Caco-2 (cell line): ENCODE measurements at regions of chr22 and their contacts with region 1.

Region 1: GRCh38 chr22:35150183-35151107 is 84.5 kb downstream of the ISX start:
- DNase-seq: peak; percentile 64 to 81
- H3K4me3 ChIP-seq: no peak overlapping the region
- H3K4me3 Mint-ChIP-seq: no peak overlapping the region
- H3K27ac Mint-ChIP-seq: no peak overlapping the region
- H3K4me1 ChIP-seq: no peaks in the 10 kb centered on the region
- H3K4me1 Mint-ChIP-seq: no peaks in the 10 kb centered on the region
- H3K27me3 ChIP-seq: no peaks in the 10 kb centered on the region
- H3K27me3 Mint-ChIP-seq: peaks cover 12% of the 10 kb centered on the region
- CTCF ChIP-seq: peak; percentile 78 to 79

Region 2: GRCh38 chr22:34414484-34415440 is 735.7 kb before region 1 on chr22:
- CTCF ChIA-PET with region 1: interaction called, 5 read pairs
- POLR2A ChIA-PET with region 1: no interaction called
- intact Hi-C with region 1: loop called (anchors 1 kb)
- DNase-seq: peak; percentile 81 to 82
- H3K4me3 ChIP-seq: no peak overlapping the region
- H3K4me3 Mint-ChIP-seq: no peak overlapping the region
- H3K27ac Mint-ChIP-seq: no peak overlapping the region
- H3K4me1 ChIP-seq: no peaks in the 10 kb centered on the region
- H3K4me1 Mint-ChIP-seq: no peaks in the 10 kb centered on the region
- H3K27me3 ChIP-seq: no peaks in the 10 kb centered on the region
- H3K27me3 Mint-ChIP-seq: peaks cover 6% of the 10 kb centered on the region
- CTCF ChIP-seq: peak; percentile 78 to 82

Region 3: GRCh38 chr22:34943830-34944229 is 206.6 kb before region 1 on chr22:
- CTCF ChIA-PET with region 1: interaction called, 12 read pairs
- POLR2A ChIA-PET with region 1: no interaction called
- intact Hi-C with region 1: no loop called
- DNase-seq: peak in 1 of 2 experiments; percentile 4
- H3K4me3 ChIP-seq: no peak overlapping the region
- H3K4me3 Mint-ChIP-seq: no peak overlapping the region
- H3K27ac Mint-ChIP-seq: no peak overlapping the region
- H3K4me1 ChIP-seq: no peaks in the 10 kb centered on the region
- H3K4me1 Mint-ChIP-seq: no peaks in the 10 kb centered on the region
- H3K27me3 ChIP-seq: no peaks in the 10 kb centered on the region
- H3K27me3 Mint-ChIP-seq: no peaks in the 10 kb centered on the region
- CTCF ChIP-seq: peak in 1 of 2 experiments; percentile 26

Region 4: DNA sequence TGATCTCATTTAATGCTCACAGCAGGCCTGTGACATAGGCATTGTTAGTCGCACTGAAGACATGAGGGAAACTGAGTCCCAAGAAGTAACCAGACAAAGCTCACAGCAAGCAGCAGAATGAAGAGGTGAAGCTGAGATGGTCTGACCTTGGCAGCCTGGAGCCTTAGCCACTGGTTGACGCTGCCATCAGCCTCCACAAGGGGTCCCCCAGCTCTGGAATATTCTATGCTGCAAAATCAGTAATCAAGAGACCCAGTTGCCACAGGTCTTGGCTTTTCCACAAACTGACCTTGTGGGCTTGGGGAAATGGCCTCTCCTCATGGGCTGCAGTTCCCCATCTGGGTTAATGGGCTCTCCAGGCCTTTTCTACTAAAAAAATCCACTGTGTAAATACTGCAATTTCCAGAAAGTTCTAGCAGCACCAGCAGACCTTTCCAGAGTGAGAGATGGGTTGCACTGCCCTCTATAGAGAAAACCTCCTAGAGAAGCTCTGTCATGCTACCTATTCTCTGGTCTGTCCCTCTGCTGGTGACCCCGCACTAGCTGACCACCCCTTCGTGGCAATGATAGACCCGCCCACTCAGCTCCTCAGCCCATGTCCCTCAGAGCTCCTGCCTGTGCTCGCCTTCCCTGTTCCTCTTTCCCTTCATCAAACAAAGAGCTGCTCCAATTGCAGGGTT is 107.1 kb before region 1 on chr22:
- CTCF ChIA-PET with region 1: interaction called, 49 read pairs
- POLR2A ChIA-PET with region 1: no interaction called
- intact Hi-C with region 1: loop called (anchors 1 kb)
- DNase-seq: peak in 1 of 2 experiments; percentile 66
- H3K4me3 ChIP-seq: no peak overlapping the region
- H3K4me3 Mint-ChIP-seq: no peak overlapping the region
- H3K27ac Mint-ChIP-seq: no peak overlapping the region
- H3K4me1 ChIP-seq: peaks cover 5% of the 10 kb centered on the region; the same call in 1 of the 2 replicates
- H3K4me1 Mint-ChIP-seq: no peaks in the 10 kb centered on the region
- H3K27me3 ChIP-seq: no peaks in the 10 kb centered on the region
- H3K27me3 Mint-ChIP-seq: peaks cover 3% of the 10 kb centered on the region
- CTCF ChIP-seq: peak; percentile 56 to 58

Region 5: GRCh38 chr22:35065796-35066218 is 84.6 kb before region 1 on chr22 and contains the start of gene ISX:
- CTCF ChIA-PET with region 1: interaction called, 11 read pairs
- POLR2A ChIA-PET with region 1: no interaction called
- intact Hi-C with region 1: no loop called
- DNase-seq: peak; percentile 93 to 96
- H3K4me3 ChIP-seq: peak within 1 kb of the TSS; percentile 28
- H3K4me3 Mint-ChIP-seq: peak within 1 kb of the TSS; percentile 78
- H3K27ac Mint-ChIP-seq: peak within 1 kb of the TSS; percentile 100
- H3K4me1 ChIP-seq: peaks cover 33% of the 10 kb centered on the region
- H3K4me1 Mint-ChIP-seq: peaks cover 44% of the 10 kb centered on the region
- H3K27me3 ChIP-seq: no peaks in the 10 kb centered on the region
- H3K27me3 Mint-ChIP-seq: no peaks in the 10 kb centered on the region
- CTCF ChIP-seq: no peak
- total RNA-seq, gene ISX: 4.7 and 5.6 TPM in 2 replicates

Region 6: GRCh38 chr22:35231585-35232084 is 81.2 kb after region 1 on chr22:
- CTCF ChIA-PET with region 1: interaction called, 19 read pairs
- POLR2A ChIA-PET with region 1: no interaction called
- intact Hi-C with region 1: loop called (anchors 2 kb)
- DNase-seq: peak; percentile 73 to 81
- H3K4me3 ChIP-seq: no peak overlapping the region
- H3K4me3 Mint-ChIP-seq: no peak overlapping the region
- H3K27ac Mint-ChIP-seq: no peak overlapping the region
- H3K4me1 ChIP-seq: no peaks in the 10 kb centered on the region
- H3K4me1 Mint-ChIP-seq: no peaks in the 10 kb centered on the region
- H3K27me3 ChIP-seq: no peaks in the 10 kb centered on the region
- H3K27me3 Mint-ChIP-seq: peaks cover 15% of the 10 kb centered on the region
- CTCF ChIP-seq: peak; percentile 94